ENCODE measurements at regions of chr2 and their contacts with region 1.

Region 1: GRCh38 chr2:88055371-88056128 is at the start of gene KRCC1:
- DNase-seq: peak; percentile 93 to 96
- ATAC-seq: peak; percentile 90 to 92
- H3K4me3 ChIP-seq: peak within 1 kb of the TSS; percentile 72 to 97 (median 91)
- H3K27ac ChIP-seq: peak within 1 kb of the TSS; percentile 96 to 99 (median 98)
- H3K4me1 ChIP-seq: peaks cover 33 to 41% of the 10 kb centered on the region in 2 donors
- H3K27me3 ChIP-seq: no peaks in the 10 kb centered on the region
- CTCF ChIP-seq: peak in 1 of 5 experiments; percentile 26
- POLR2A ChIP-seq: peak; percentile 94 to 95
- total RNA-seq, gene KRCC1: 20.0 to 29.5 (median 27.2) TPM

Region 2: GRCh38 chr2:86440631-86441391 is 1614.7 kb before region 1 on chr2 and contains the start of gene KDM3A:
- in situ Hi-C with region 1: loop called in 1 of 4 experiments (anchors 10 kb)
- intact Hi-C with region 1: no loop called
- DNase-seq: peak; percentile 99
- ATAC-seq: peak; percentile 84 to 86
- H3K4me3 ChIP-seq: peak within 1 kb of the TSS; percentile 74 to 81 (median 76)
- H3K27ac ChIP-seq: peak within 1 kb of the TSS; percentile 86 to 98 (median 91)
- H3K4me1 ChIP-seq: peaks cover 31 to 33% of the 10 kb centered on the region in 2 donors
- H3K27me3 ChIP-seq: no peaks in the 10 kb centered on the region
- CTCF ChIP-seq: peak in 1 of 5 experiments; percentile 5
- POLR2A ChIP-seq: no peak
- total RNA-seq, gene KDM3A: 20.7 to 36.8 (median 26.1) TPM

Region 3: GRCh38 chr2:88099798-88100488 is 44.4 kb after region 1 on chr2:
- in situ Hi-C with region 1: no loop called
- intact Hi-C with region 1: no loop called
- DNase-seq: peak; percentile 51 to 83
- ATAC-seq: peak; percentile 80
- H3K4me3 ChIP-seq: peak overlapping the region in 1 of 4 donors; percentile 11
- H3K27ac ChIP-seq: peak overlapping the region; percentile 82 to 94 (median 89)
- H3K4me1 ChIP-seq: peaks cover 14 to 18% of the 10 kb centered on the region in 2 donors
- H3K27me3 ChIP-seq: no peaks in the 10 kb centered on the region
- CTCF ChIP-seq: no peak
- POLR2A ChIP-seq: no peak

Region 4: GRCh38 chr2:88114889-88115288 is 59.3 kb after region 1 on chr2:
- in situ Hi-C with region 1: no loop called
- intact Hi-C with region 1: loop called (anchors 5 kb)
- DNase-seq: no peak
- ATAC-seq: peak; percentile 31 to 39
- H3K4me3 ChIP-seq: no peak overlapping the region
- H3K27ac ChIP-seq: peak overlapping the region; percentile 18 to 74 (median 48)
- H3K4me1 ChIP-seq: peaks cover 8 to 27% of the 10 kb centered on the region in 2 donors
- H3K27me3 ChIP-seq: no peaks in the 10 kb centered on the region
- CTCF ChIP-seq: no peak
- POLR2A ChIP-seq: no peak

Region 5: DNA sequence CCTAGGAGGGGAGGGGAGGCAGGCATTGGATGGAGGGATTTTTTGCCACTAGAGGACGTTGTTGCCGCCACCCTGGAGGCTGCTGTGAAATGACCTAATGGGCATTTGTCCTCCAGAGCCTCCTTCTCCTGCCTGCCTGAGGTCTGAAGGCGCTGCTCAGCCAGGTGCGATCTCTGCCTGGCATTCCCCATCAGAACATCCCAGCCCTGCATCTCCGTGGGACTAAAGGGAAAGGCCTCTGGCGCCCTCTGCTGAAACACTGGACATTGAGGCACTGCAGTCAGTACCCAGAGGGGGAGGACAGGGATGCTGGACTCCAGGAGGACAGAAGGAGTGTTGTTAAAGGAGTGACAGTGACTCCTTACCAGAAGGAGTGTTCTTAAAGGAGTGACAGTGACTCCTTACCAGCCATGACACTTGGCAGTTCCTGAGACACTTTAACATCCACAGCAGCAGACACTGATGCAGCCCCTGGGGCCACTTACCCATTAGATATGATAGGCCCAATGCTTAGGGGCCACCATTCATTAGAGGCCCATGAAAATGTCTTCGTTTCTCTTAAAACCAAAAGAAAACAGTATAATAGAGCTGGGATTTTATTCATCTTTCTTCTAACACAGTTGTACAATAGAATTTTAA is 131.6 kb after region 1 on chr2:
- in situ Hi-C with region 1: no loop called
- intact Hi-C with region 1: loop called (anchors 1 kb)
- DNase-seq: peak; percentile 51 to 75
- ATAC-seq: peak; percentile 81 to 93
- H3K4me3 ChIP-seq: no peak overlapping the region
- H3K27ac ChIP-seq: no peak overlapping the region
- H3K4me1 ChIP-seq: no peaks in the 10 kb centered on the region
- H3K27me3 ChIP-seq: no peaks in the 10 kb centered on the region
- CTCF ChIP-seq: peak; percentile 60 to 83 (median 75)
- POLR2A ChIP-seq: no peak

Region 6: GRCh38 chr2:88281302-88282217 is 226.0 kb after region 1 on chr2:
- in situ Hi-C with region 1: no loop called
- intact Hi-C with region 1: no loop called
- DNase-seq: peak in 1 of 2 donors; percentile 17
- ATAC-seq: peak in 1 of 2 donors; percentile 18
- H3K4me3 ChIP-seq: no peak overlapping the region
- H3K27ac ChIP-seq: no peak overlapping the region
- H3K4me1 ChIP-seq: no peaks in the 10 kb centered on the region
- H3K27me3 ChIP-seq: peaks cover 0 to 11% (median 9%) of the 10 kb centered on the region in 3 donors
- CTCF ChIP-seq: no peak
- POLR2A ChIP-seq: no peak

Region 7: GRCh38 chr2:88691339-88692183 is 636.0 kb after region 1 on chr2 and contains the start of gene RPIA:
- in situ Hi-C with region 1: no loop called
- intact Hi-C with region 1: loop called (anchors 10 kb)
- DNase-seq: peak; percentile 99
- ATAC-seq: peak; percentile 92 to 97
- H3K4me3 ChIP-seq: peak within 1 kb of the TSS; percentile 76 to 94 (median 84)
- H3K27ac ChIP-seq: peak within 1 kb of the TSS; percentile 86 to 93 (median 90)
- H3K4me1 ChIP-seq: peaks cover 45 to 49% of the 10 kb centered on the region in 2 donors
- H3K27me3 ChIP-seq: no peaks in the 10 kb centered on the region
- CTCF ChIP-seq: peak; percentile 41 to 86 (median 71)
- POLR2A ChIP-seq: peak; percentile 80 to 86
- total RNA-seq, gene RPIA: 3.3 to 6.8 (median 5.9) TPM